Dendritic cell treated with granulocyte-macrophage colony-stimulating factor and Interleukin-4, amounts not matched to agents 40 ng/mL and 50 ng/mL, for 4 days (primary cell): ENCODE measurements at regions of chr6 and their contacts with region 1.

Region 1: DNA sequence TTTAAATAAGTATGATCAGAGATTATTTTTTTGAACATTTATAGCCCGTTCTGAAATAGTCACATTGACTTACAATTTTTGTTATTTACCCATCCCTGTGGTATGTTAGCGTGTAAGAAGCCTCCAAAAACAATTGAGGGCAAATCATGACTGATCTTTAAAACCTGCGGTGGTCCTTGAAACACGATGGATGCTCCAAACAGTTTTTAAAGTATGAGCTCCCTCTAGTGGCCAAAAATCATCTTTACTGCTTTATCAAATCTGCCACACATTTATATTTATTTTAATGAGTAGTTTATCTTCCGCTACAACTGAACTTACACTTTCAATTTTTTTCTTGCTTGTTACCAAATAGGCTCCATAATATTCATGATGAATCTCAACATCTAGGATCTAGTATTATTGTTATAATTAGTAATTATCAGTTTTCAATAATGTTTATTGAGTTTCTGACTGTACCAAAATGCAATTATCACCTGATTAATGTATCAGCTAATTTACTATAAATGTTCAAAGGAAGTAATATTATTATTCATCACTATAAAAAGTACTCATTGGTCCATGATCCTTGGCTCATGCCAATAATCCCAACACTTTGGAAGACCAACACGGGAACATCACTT is 52.2 kb downstream of the MARCKS start:
- H3K4me3 Mint-ChIP-seq: no peak overlapping the region
- H3K27ac Mint-ChIP-seq: no peak overlapping the region
- H3K4me1 Mint-ChIP-seq: no peaks in the 10 kb centered on the region
- H3K27me3 Mint-ChIP-seq: peaks cover 1% of the 10 kb centered on the region

Region 2: GRCh38 chr6:113306552-113307145 is 602.7 kb before region 1 on chr6:
- intact Hi-C with region 1: loop called (anchors 1 kb)
- H3K4me3 Mint-ChIP-seq: no peak overlapping the region
- H3K27ac Mint-ChIP-seq: no peak overlapping the region
- H3K4me1 Mint-ChIP-seq: no peaks in the 10 kb centered on the region
- H3K27me3 Mint-ChIP-seq: peaks cover 3% of the 10 kb centered on the region